ENCODE measurements at regions of chr2 and their contacts with region 1.

Region 1: GRCh38 chr2:10408649-10409579 is 39.2 kb downstream of the ODC1 start:
- DNase-seq: peak; percentile 93 to 94
- ATAC-seq: peak; percentile 58 to 80
- H3K4me3 ChIP-seq: peak overlapping the region; percentile 13; the same call in 2 of the 3 replicates
- H3K27ac ChIP-seq: peak overlapping the region; percentile 93 to 95
- H3K4me1 ChIP-seq: peaks cover 63% of the 10 kb centered on the region
- CTCF ChIP-seq: peak; percentile 99
- EP300 ChIP-seq: no peak; a peak in 1 of 5 replicates
- POLR2A ChIP-seq: no peak
- RAD21 ChIP-seq: peak; percentile 99

Region 2: GRCh38 chr2:10157293-10157692 is 251.6 kb before region 1 on chr2:
- CTCF ChIA-PET with region 1: interaction called, 53 read pairs
- POLR2A ChIA-PET with region 1: no interaction called
- DNase-seq: peak; percentile 41 to 44
- ATAC-seq: peak in 1 of 2 experiments; percentile 53; a peak in 3 of 6 replicates
- H3K4me3 ChIP-seq: no peak overlapping the region
- H3K27ac ChIP-seq: no peak overlapping the region
- H3K4me1 ChIP-seq: no peaks in the 10 kb centered on the region
- CTCF ChIP-seq: no peak
- EP300 ChIP-seq: no peak
- POLR2A ChIP-seq: no peak
- RAD21 ChIP-seq: peak in 1 of 2 experiments; percentile 7; a peak in 1 of 5 replicates

Region 3: GRCh38 chr2:10225291-10226037 is 183.4 kb before region 1 on chr2:
- CTCF ChIA-PET with region 1: interaction called, 10 read pairs
- POLR2A ChIA-PET with region 1: no interaction called
- DNase-seq: no peak
- ATAC-seq: no peak; a peak in 1 of 6 replicates
- H3K4me3 ChIP-seq: no peak overlapping the region
- H3K27ac ChIP-seq: no peak overlapping the region
- H3K4me1 ChIP-seq: peaks cover 6% of the 10 kb centered on the region; the same call in 1 of the 3 replicates
- CTCF ChIP-seq: no peak
- EP300 ChIP-seq: no peak
- POLR2A ChIP-seq: no peak
- RAD21 ChIP-seq: no peak

Region 4: GRCh38 chr2:10297241-10297830 is 111.6 kb before region 1 on chr2:
- CTCF ChIA-PET with region 1: interaction called, 215 read pairs
- POLR2A ChIA-PET with region 1: interaction called, 19 read pairs
- DNase-seq: no peak
- ATAC-seq: no peak
- H3K4me3 ChIP-seq: no peak overlapping the region
- H3K27ac ChIP-seq: peak overlapping the region; percentile 72 to 86
- H3K4me1 ChIP-seq: peaks cover 34% of the 10 kb centered on the region
- CTCF ChIP-seq: no peak
- EP300 ChIP-seq: 0 out of 5 replicates have a peak, but pooled peaks of 1 of the 2 experiments have one; percentile 9
- POLR2A ChIP-seq: no peak
- RAD21 ChIP-seq: no peak

Region 5: GRCh38 chr2:10352361-10352760 is 56.6 kb before region 1 on chr2:
- CTCF ChIA-PET with region 1: interaction called, 11 read pairs
- POLR2A ChIA-PET with region 1: no interaction called
- DNase-seq: no peak
- ATAC-seq: no peak
- H3K4me3 ChIP-seq: no peak overlapping the region
- H3K27ac ChIP-seq: 0 out of 6 replicates have a peak overlapping the region, but pooled peaks of 1 of the 2 experiments have one; percentile 8
- H3K4me1 ChIP-seq: peaks cover 17% of the 10 kb centered on the region
- CTCF ChIP-seq: no peak
- EP300 ChIP-seq: no peak
- POLR2A ChIP-seq: no peak
- RAD21 ChIP-seq: no peak

Region 6: DNA sequence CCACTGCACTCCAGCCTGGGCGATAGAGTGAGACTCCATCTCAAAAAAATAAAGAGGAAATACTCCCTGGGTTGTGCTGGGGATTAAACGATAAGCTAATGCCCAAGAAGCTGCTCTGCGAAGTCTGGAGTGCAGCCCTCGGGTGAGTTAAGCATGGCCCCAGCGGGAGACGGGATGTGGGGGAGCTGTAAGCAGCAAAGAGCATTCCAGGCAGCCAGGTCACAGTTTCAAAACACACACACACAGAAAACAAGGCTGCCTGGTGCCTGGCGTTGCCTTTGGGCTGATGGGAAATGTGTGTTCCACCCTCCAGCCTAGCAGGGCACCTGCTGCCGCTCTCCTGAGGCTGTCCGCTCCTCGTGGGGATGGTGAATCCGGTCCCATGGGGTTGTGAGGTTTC is 15.1 kb after region 1 on chr2:
- CTCF ChIA-PET with region 1: interaction called, 91 read pairs
- POLR2A ChIA-PET with region 1: no interaction called
- DNase-seq: no peak
- ATAC-seq: no peak
- H3K4me3 ChIP-seq: no peak overlapping the region
- H3K27ac ChIP-seq: no peak overlapping the region
- H3K4me1 ChIP-seq: no peaks in the 10 kb centered on the region
- CTCF ChIP-seq: no peak
- EP300 ChIP-seq: no peak
- POLR2A ChIP-seq: no peak
- RAD21 ChIP-seq: no peak

Region 7: DNA sequence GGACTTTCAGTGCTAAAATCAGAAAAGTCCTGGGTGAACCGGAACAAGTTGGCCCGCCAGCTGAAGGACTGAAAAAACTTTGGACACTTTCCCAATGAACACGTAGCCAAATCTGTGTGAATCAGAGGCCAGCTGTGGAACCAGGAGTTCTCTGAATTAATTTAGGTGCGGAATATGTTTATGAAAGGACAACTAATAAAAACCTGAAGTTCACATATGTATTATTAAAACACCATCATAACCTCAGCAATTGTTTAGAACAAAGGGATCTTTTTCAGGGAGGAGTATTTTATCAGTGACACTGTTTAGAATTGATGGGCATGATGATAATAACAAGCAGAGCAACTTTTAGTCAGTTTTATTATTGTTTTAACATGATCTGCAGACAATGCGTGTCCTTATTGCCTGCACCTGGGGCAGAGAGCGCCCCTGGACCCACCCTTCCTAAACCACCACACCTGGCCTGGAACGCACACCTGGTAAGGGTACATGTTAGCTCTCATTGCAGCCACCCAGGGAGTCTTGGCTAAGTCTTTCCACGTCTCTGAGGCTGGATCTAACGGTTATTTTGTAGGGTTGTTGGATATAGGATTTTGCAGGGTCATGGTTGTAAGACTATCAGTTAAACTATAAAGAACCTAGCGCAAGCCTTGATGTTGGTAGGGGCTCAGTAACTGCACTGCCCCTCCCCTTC is 49.1 kb after region 1 on chr2:
- CTCF ChIA-PET with region 1: no interaction called
- POLR2A ChIA-PET with region 1: no interaction called
- DNase-seq: no peak
- ATAC-seq: no peak
- H3K4me3 ChIP-seq: no peak overlapping the region
- H3K27ac ChIP-seq: peak overlapping the region in 1 of 2 experiments; percentile 15; a peak in 1 of 6 replicates
- H3K4me1 ChIP-seq: peaks cover 13% of the 10 kb centered on the region; the same call in 2 of the 3 replicates
- CTCF ChIP-seq: no peak
- EP300 ChIP-seq: no peak
- POLR2A ChIP-seq: no peak
- RAD21 ChIP-seq: no peak

Region 8: GRCh38 chr2:10629819-10630532 is 221.1 kb after region 1 on chr2:
- CTCF ChIA-PET with region 1: no interaction called
- POLR2A ChIA-PET with region 1: no interaction called
- DNase-seq: no peak
- ATAC-seq: no peak
- H3K4me3 ChIP-seq: no peak overlapping the region
- H3K27ac ChIP-seq: no peak overlapping the region
- H3K4me1 ChIP-seq: no peaks in the 10 kb centered on the region
- CTCF ChIP-seq: no peak
- EP300 ChIP-seq: no peak
- POLR2A ChIP-seq: no peak
- RAD21 ChIP-seq: no peak